Stomach (tissue), 19 donors: ENCODE measurements at regions of chr3 and their contacts with region 1.

Region 1: DNA sequence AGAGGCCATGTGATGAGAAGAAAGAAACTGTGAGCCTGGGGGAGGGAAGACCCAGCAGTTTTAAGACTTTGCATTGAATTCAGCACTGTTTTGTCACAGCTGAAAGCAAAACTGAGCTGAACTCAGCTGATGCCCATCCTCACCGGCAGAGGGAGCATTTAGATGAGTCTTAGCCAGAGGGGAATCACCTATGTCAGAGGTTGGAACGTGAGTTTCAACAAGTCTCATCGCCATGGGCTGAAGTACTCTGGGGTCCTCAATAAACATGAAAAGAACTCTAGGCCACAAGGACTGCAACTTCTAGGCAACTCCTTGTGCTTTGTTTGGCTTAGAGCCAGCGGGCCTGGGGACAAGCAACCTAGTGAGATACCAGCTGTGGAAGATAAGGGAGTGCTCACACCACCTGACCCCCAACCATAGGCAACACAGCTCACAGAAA is 324.5 kb downstream of the TBL1XR1 start:
- DNase-seq: peak; percentile 52 to 74
- H3K4me3 ChIP-seq: no peak overlapping the region
- H3K27ac ChIP-seq: no peak overlapping the region
- H3K4me1 ChIP-seq: peaks cover 0 to 15% (median 2%) of the 10 kb centered on the region in 4 donors
- H3K27me3 ChIP-seq: no peaks in the 10 kb centered on the region
- CTCF ChIP-seq: peak in 5 of 7 experiments; percentile 61 to 76 (median 74)
- EP300 ChIP-seq: no peak
- POLR2A ChIP-seq: no peak

Region 2: DNA sequence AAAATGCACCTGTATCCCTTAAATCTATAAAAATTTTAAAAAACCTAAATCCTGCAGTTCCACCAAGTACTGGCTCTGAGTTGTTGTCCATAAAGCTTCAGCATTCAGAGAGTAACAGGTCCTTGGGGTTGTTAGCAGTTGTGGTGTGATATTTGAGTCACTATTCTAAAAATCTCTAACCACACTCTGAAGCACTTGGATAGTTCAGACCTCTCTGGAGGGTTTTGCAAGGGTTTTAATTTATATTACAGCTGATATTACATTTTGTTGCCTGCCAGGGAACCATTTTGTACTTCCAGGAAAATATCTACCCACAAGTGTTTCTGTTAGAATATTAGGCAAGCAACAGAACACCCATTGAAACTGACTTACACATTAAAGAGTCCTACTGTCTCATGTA is 68.9 kb after region 1 on chr3:
- intact Hi-C with region 1: loop called (anchors 10 kb)
- DNase-seq: no peak
- H3K4me3 ChIP-seq: no peak overlapping the region
- H3K27ac ChIP-seq: no peak overlapping the region
- H3K4me1 ChIP-seq: peaks cover 0 to 5% (median 0%) of the 10 kb centered on the region in 4 donors
- H3K27me3 ChIP-seq: no peaks in the 10 kb centered on the region
- CTCF ChIP-seq: no peak
- EP300 ChIP-seq: no peak
- POLR2A ChIP-seq: no peak